ENCODE measurements at regions of chr4 and their contacts with region 1.

Region 1: GRCh38 chr4:173652283-173652931 is 122.4 kb upstream of the HAND2 start:
- DNase-seq: no peak
- H3K4me3 ChIP-seq: no peak overlapping the region
- H3K27ac ChIP-seq: peak overlapping the region in 2 of 4 donors; percentile 9 to 64
- H3K4me1 ChIP-seq: no peaks in the 10 kb centered on the region
- H3K27me3 ChIP-seq: no peaks in the 10 kb centered on the region
- CTCF ChIP-seq: no peak
- EP300 ChIP-seq: peak; percentile 35
- POLR2A ChIP-seq: no peak

Region 2: DNA sequence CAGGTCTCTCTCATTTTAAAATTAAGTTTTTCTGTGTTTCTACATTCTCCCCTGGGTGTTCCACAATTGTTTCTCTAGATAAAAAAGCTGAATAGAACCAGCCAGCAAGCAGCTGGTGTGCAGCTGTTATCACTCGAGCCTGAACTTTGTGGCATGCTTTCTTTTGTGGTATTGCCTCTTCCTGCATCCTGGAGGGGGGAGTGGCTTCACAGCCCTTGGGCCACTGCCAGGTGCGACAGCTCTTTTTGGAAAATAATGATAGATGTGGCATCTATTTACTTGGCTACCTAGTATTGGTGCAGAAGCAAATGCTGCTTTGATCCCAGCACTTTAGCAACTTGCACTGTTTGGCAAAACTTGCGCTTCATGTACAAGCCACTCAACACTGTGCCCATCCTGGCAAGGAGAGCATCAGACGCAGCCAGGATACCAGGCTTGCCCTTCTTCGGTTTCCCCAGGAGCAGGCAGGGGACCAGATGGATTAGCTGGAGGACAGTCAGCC is 387.7 kb before region 1 on chr4:
- in situ Hi-C with region 1: no loop called
- intact Hi-C with region 1: no loop called
- DNase-seq: peak; percentile 31
- H3K4me3 ChIP-seq: no peak overlapping the region
- H3K27ac ChIP-seq: no peak overlapping the region
- H3K4me1 ChIP-seq: peaks cover 0 to 19% (median 3%) of the 10 kb centered on the region in 4 donors
- H3K27me3 ChIP-seq: no peaks in the 10 kb centered on the region
- CTCF ChIP-seq: no peak
- EP300 ChIP-seq: no peak
- POLR2A ChIP-seq: no peak

Region 3: GRCh38 chr4:173573286-173573685 is 79.1 kb before region 1 on chr4:
- in situ Hi-C with region 1: no loop called
- intact Hi-C with region 1: loop called (anchors 5 kb)
- DNase-seq: no peak
- H3K4me3 ChIP-seq: no peak overlapping the region
- H3K27ac ChIP-seq: peak overlapping the region in 3 of 4 donors; percentile 53 to 72 (median 68)
- H3K4me1 ChIP-seq: peaks cover 6 to 26% (median 19%) of the 10 kb centered on the region in 4 donors
- H3K27me3 ChIP-seq: no peaks in the 10 kb centered on the region
- CTCF ChIP-seq: no peak
- EP300 ChIP-seq: no peak
- POLR2A ChIP-seq: no peak